B cell (primary cell): ENCODE measurements at regions of chr11 and their contacts with region 1.

Region 1: DNA sequence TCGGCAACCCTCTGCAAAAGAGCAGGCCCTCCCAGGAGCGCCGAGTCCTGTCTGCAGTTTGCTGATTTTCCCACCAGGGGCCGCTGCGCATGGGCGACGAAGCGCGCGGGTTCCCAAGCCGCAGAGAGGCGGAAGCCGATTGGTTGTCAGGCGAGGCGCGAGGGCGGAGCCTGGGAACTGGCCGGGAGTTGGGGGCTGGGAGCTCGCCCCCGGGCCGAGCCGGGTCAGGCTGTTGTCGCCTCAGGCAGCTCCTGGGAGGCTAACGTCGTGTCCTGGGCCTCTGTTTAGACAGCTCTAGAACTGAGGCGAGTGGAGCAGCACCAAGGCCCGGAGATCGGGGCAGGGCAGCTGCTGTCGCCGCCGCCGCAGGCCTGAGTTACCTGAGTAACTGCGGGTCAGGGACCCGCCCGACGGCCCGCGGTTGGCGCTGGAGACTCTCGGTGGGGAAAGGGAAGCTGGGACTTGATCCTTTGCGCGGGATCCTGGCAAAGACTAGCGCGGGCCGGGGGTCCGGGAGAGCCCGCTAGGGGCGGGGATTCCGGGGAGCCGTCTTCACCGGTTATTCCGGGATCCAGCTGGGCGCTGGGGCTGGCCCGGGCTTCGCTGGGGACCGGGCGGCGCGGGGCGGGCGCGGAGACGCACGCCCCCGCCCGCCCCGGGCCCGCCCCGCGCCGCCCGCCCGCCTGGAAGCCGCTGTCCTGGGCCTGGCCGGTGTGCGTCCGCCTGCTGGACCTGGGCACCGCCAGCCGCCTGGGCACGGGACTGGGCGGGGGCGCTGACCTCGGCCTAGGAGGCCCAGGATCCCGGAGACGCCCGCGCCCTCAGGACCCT is at the start of gene STIM1:
- DNase-seq: peak; percentile 97
- ATAC-seq: peak; percentile 74
- H3K4me3 ChIP-seq: peak within 1 kb of the TSS; percentile 78 to 93 (median 91)
- H3K4me3 Mint-ChIP-seq: peak within 1 kb of the TSS; percentile 98
- H3K27ac ChIP-seq: peak within 1 kb of the TSS; percentile 98 to 99
- H3K27ac Mint-ChIP-seq: peak within 1 kb of the TSS; percentile 99
- H3K4me1 ChIP-seq: peaks cover 61 to 63% of the 10 kb centered on the region in 2 donors
- H3K4me1 Mint-ChIP-seq: peaks cover 61% of the 10 kb centered on the region
- H3K27me3 ChIP-seq: no peaks in the 10 kb centered on the region
- H3K27me3 Mint-ChIP-seq: no peaks in the 10 kb centered on the region
- CTCF ChIP-seq: peak; percentile 90
- total RNA-seq, gene STIM1: 74.8 and 76.7 TPM in 2 replicates

Region 2: GRCh38 chr11:3378426-3379423 is 476.5 kb before region 1 on chr11 and contains the start of gene ZNF195:
- CTCF ChIA-PET with region 1: no interaction called
- POLR2A ChIA-PET with region 1: no interaction called
- intact Hi-C with region 1: loop called (anchors 5 kb)
- DNase-seq: peak; percentile 95
- ATAC-seq: peak; percentile 100
- H3K4me3 ChIP-seq: peak within 1 kb of the TSS; percentile 67 to 97 (median 87)
- H3K4me3 Mint-ChIP-seq: peak within 1 kb of the TSS; percentile 97
- H3K27ac ChIP-seq: peak within 1 kb of the TSS; percentile 63 to 92
- H3K27ac Mint-ChIP-seq: peak within 1 kb of the TSS; percentile 95
- H3K4me1 ChIP-seq: peaks cover 16 to 24% of the 10 kb centered on the region in 2 donors
- H3K4me1 Mint-ChIP-seq: peaks cover 39% of the 10 kb centered on the region
- H3K27me3 ChIP-seq: no peaks in the 10 kb centered on the region
- H3K27me3 Mint-ChIP-seq: no peaks in the 10 kb centered on the region
- CTCF ChIP-seq: no peak
- total RNA-seq, gene ZNF195: 46.0 and 47.3 TPM in 2 replicates

Region 3: GRCh38 chr11:3841426-3842350 is 13.5 kb before region 1 on chr11:
- CTCF ChIA-PET with region 1: interaction called, 662 read pairs
- POLR2A ChIA-PET with region 1: interaction called, 69 read pairs
- intact Hi-C with region 1: loop called (anchors 1 kb)
- DNase-seq: peak; percentile 99
- ATAC-seq: no peak
- H3K4me3 ChIP-seq: peak overlapping the region; percentile 31 to 89 (median 85)
- H3K4me3 Mint-ChIP-seq: peak overlapping the region; percentile 84
- H3K27ac ChIP-seq: peak overlapping the region; percentile 95 to 98
- H3K27ac Mint-ChIP-seq: peak overlapping the region; percentile 98
- H3K4me1 ChIP-seq: peaks cover 39 to 44% of the 10 kb centered on the region in 2 donors
- H3K4me1 Mint-ChIP-seq: peaks cover 48% of the 10 kb centered on the region
- H3K27me3 ChIP-seq: no peaks in the 10 kb centered on the region
- H3K27me3 Mint-ChIP-seq: no peaks in the 10 kb centered on the region
- CTCF ChIP-seq: peak; percentile 81

Region 4: DNA sequence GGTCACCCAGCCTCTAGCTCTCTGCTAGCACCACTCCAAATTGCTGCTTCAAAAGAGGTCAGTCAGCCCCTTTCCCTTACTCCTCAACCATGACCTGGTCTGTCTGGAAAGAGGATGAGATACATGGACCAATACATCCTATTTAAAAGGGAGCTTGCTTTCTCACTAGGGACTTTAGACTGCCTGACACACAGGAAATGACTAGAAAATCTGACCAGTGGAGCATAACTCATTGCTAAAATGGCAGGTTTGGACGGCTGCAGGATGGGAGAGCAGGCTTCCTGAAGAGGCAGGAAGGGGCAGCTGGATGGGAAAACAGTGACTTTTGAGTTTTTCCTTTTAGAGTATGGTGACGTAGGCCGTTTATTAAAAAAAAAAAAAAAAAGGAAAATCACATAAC is 25.5 kb after region 1 on chr11:
- CTCF ChIA-PET with region 1: interaction called, 662 read pairs
- POLR2A ChIA-PET with region 1: interaction called, 13 read pairs
- intact Hi-C with region 1: loop called (anchors 1 kb)
- DNase-seq: peak; percentile 65
- ATAC-seq: peak; percentile 77
- H3K4me3 ChIP-seq: peak overlapping the region in 1 of 5 experiments; percentile 27
- H3K4me3 Mint-ChIP-seq: peak overlapping the region; percentile 87
- H3K27ac ChIP-seq: peak overlapping the region; percentile 68 to 93
- H3K27ac Mint-ChIP-seq: peak overlapping the region; percentile 92
- H3K4me1 ChIP-seq: peaks cover 79 to 87% of the 10 kb centered on the region in 2 donors
- H3K4me1 Mint-ChIP-seq: peaks cover 78% of the 10 kb centered on the region
- H3K27me3 ChIP-seq: no peaks in the 10 kb centered on the region
- H3K27me3 Mint-ChIP-seq: no peaks in the 10 kb centered on the region
- CTCF ChIP-seq: no peak

Region 5: GRCh38 chr11:3905080-3905953 is 50.1 kb after region 1 on chr11:
- CTCF ChIA-PET with region 1: interaction called, 37 read pairs
- POLR2A ChIA-PET with region 1: interaction called, 17 read pairs
- intact Hi-C with region 1: no loop called
- DNase-seq: no peak
- ATAC-seq: peak; percentile 63
- H3K4me3 ChIP-seq: no peak overlapping the region
- H3K4me3 Mint-ChIP-seq: peak overlapping the region; percentile 49
- H3K27ac ChIP-seq: peak overlapping the region in 1 of 2 donors; percentile 46
- H3K27ac Mint-ChIP-seq: peak overlapping the region; percentile 37
- H3K4me1 ChIP-seq: peaks cover 61 to 66% of the 10 kb centered on the region in 2 donors
- H3K4me1 Mint-ChIP-seq: peaks cover 76% of the 10 kb centered on the region
- H3K27me3 ChIP-seq: no peaks in the 10 kb centered on the region
- H3K27me3 Mint-ChIP-seq: no peaks in the 10 kb centered on the region
- CTCF ChIP-seq: no peak

Region 6: DNA sequence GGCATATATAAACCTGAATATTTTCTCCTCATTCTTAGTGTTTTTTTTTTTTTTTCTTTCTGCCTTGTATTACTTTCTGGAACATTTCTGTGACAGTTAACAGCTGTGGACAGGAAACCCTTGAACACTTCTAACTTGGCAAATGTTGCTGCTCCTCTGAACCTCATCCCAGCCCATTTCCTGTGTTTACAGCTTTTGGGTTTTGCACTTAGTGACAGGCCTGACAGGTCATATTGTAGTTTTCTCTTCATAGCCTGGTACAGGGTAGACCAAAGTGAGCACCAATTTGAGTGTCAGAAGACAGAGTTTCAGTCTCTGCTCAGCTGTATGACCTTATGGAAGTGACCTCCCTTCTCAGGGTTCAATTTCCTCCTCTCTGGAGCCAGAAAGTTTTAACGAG is 91.9 kb after region 1 on chr11:
- CTCF ChIA-PET with region 1: interaction called, 19 read pairs
- POLR2A ChIA-PET with region 1: interaction called, 3 read pairs
- intact Hi-C with region 1: no loop called
- DNase-seq: peak; percentile 52
- ATAC-seq: peak; percentile 69
- H3K4me3 ChIP-seq: peak overlapping the region in 3 of 5 experiments; percentile 21 to 35 (median 28)
- H3K4me3 Mint-ChIP-seq: peak overlapping the region; percentile 55
- H3K27ac ChIP-seq: peak overlapping the region; percentile 59 to 84
- H3K27ac Mint-ChIP-seq: peak overlapping the region; percentile 87
- H3K4me1 ChIP-seq: peaks cover 80 to 83% of the 10 kb centered on the region in 2 donors
- H3K4me1 Mint-ChIP-seq: peaks cover 92% of the 10 kb centered on the region
- H3K27me3 ChIP-seq: no peaks in the 10 kb centered on the region
- H3K27me3 Mint-ChIP-seq: no peaks in the 10 kb centered on the region
- CTCF ChIP-seq: no peak

Region 7: GRCh38 chr11:3984896-3985295 is 129.7 kb after region 1 on chr11:
- CTCF ChIA-PET with region 1: interaction called, 132 read pairs
- POLR2A ChIA-PET with region 1: interaction called, 11 read pairs
- intact Hi-C with region 1: no loop called
- DNase-seq: peak; percentile 58
- ATAC-seq: peak; percentile 69
- H3K4me3 ChIP-seq: no peak overlapping the region
- H3K4me3 Mint-ChIP-seq: no peak overlapping the region
- H3K27ac ChIP-seq: no peak overlapping the region
- H3K27ac Mint-ChIP-seq: peak overlapping the region; percentile 51
- H3K4me1 ChIP-seq: peaks cover 23 to 27% of the 10 kb centered on the region in 2 donors
- H3K4me1 Mint-ChIP-seq: peaks cover 44% of the 10 kb centered on the region
- H3K27me3 ChIP-seq: no peaks in the 10 kb centered on the region
- H3K27me3 Mint-ChIP-seq: no peaks in the 10 kb centered on the region
- CTCF ChIP-seq: peak; percentile 48